Psoas muscle (tissue), 8 donors: ENCODE measurements at regions of chr6 and their contacts with region 1.

Region 1: GRCh38 chr6:16238057-16238962 is at the start of gene GMPR:
- DNase-seq: peak; percentile 86 to 91
- ATAC-seq: peak; percentile 57 to 71 (median 61)
- H3K4me3 ChIP-seq: peak within 1 kb of the TSS; percentile 82
- H3K27ac ChIP-seq: peak within 1 kb of the TSS; percentile 93
- H3K4me1 ChIP-seq: peaks cover 51% of the 10 kb centered on the region
- H3K27me3 ChIP-seq: no peaks in the 10 kb centered on the region
- CTCF ChIP-seq: peak; percentile 14
- total RNA-seq, gene GMPR: 139 to 265 (median 189) TPM

Region 2: DNA sequence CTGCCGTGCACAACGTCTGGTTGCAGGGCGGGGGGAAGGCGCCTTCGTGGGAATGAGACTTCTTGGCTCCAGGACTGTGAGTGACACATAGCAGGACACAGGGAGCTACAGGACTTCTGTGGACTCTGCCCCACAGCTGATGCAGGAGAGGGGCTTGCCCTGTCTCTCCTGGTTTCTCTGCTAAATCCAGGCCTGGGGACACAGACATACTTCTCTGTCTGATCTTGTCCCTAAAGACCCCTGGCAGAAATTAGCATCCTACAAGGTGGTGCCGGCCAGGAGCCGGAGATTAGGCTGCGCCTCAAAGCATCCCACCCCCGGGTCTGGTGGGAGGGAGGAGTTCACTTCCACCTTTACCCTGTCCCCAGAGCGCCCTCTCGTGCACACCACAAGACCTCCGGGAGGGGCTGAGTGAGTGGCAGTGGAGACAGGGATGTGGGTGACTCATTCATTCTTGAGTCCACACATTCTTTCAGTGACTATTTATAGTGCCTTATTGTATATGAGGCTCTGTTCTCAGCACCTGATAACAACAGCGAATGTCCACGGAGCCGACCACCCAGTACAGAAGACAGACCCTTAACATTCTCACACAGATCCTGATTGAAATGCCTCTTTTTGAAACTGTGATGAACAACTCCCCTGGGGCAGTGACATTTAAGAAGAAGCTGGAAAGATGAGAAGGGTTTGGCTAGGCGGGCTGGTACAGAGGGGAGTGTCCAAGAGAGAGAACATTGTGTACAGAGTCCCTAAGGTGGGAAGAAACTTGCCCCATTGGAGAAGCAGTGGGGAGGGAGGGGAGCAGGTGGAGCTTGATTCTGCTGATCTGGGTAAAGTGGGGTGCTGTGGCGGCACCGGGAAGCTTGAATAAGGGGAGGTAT is 39.0 kb after region 1 on chr6:
- intact Hi-C with region 1: loop called (anchors 2 kb)
- DNase-seq: peak; percentile 84 to 95
- ATAC-seq: peak; percentile 87 to 89 (median 88)
- H3K4me3 ChIP-seq: peak overlapping the region; percentile 41
- H3K27ac ChIP-seq: peak overlapping the region; percentile 95
- H3K4me1 ChIP-seq: peaks cover 62% of the 10 kb centered on the region
- H3K27me3 ChIP-seq: no peaks in the 10 kb centered on the region
- CTCF ChIP-seq: peak; percentile 43

Region 3: DNA sequence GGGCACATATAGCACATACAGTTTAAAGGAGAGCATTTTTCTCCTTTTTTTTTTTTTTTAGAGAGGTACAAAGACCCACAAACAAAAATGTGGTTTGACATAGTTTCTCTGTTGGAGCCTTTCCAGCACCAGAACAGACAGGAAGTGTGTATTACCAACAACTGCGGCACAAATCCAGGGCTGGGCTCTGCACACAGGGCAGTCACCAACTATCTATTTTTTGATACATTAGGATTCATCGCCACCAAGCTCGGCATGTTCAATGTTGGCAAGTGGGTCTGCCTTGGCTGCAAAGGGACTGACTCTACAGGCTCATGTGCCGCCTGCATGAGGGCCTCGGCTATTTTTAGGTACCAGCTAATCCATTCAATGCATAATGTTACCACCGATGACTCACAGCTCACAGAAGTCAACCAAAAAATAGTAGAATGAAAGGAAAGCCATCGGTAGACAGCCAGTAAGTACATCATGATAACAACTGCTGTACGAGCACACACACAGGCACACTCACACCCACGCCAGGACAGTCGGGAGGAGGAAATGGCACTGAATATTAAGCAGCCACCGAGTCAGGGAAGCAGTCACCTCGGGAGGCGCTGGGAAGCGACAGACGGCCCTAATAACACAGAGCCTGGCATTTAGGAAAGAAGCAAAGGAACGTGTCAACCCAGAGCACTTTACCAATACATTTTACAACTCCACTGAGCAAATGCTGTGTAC is 81.7 kb after region 1 on chr6:
- intact Hi-C with region 1: loop called (anchors 2 to 5 kb)
- DNase-seq: peak; percentile 80 to 92
- ATAC-seq: peak; percentile 78 to 86 (median 82)
- H3K4me3 ChIP-seq: peak overlapping the region; percentile 59
- H3K27ac ChIP-seq: peak overlapping the region; percentile 99
- H3K4me1 ChIP-seq: peaks cover 71% of the 10 kb centered on the region
- H3K27me3 ChIP-seq: no peaks in the 10 kb centered on the region
- CTCF ChIP-seq: no peak

Region 4: GRCh38 chr6:16402581-16402900 is 164.2 kb after region 1 on chr6:
- intact Hi-C with region 1: no loop called
- DNase-seq: no peak
- ATAC-seq: no peak
- H3K4me3 ChIP-seq: no peak overlapping the region
- H3K27ac ChIP-seq: no peak overlapping the region
- H3K4me1 ChIP-seq: peaks cover 4% of the 10 kb centered on the region
- H3K27me3 ChIP-seq: no peaks in the 10 kb centered on the region
- CTCF ChIP-seq: no peak